Vagina (tissue), 2 donors: ENCODE measurements at regions of chr11 and their contacts with region 1.

Region 1: DNA sequence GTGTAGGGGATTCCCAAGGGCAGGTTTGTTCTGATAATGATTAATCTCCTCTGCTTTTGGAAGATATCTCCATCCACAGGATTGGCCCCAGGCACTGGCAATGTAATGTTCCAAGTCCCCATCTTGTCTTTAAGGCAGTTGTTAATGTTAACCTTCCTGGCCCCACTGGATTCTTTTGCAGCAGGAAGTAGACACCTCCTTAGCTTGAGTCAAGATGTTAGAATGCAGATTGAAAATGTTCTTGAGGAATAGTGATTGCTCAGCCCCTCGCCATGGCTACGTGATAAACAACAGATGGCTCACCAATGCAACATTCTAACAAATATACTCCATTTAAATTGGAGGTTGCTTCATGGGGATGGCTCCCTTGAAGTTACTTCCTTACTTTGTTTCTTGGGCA is 7.3 kb downstream of the HEPHL1 start:
- DNase-seq: peak in 1 of 2 donors; percentile 72
- H3K4me3 ChIP-seq: no peak overlapping the region
- H3K27ac ChIP-seq: no peak overlapping the region
- H3K4me1 ChIP-seq: no peaks in the 10 kb centered on the region
- H3K27me3 ChIP-seq: no peaks in the 10 kb centered on the region
- CTCF ChIP-seq: no peak
- POLR2A ChIP-seq: no peak

Region 2: DNA sequence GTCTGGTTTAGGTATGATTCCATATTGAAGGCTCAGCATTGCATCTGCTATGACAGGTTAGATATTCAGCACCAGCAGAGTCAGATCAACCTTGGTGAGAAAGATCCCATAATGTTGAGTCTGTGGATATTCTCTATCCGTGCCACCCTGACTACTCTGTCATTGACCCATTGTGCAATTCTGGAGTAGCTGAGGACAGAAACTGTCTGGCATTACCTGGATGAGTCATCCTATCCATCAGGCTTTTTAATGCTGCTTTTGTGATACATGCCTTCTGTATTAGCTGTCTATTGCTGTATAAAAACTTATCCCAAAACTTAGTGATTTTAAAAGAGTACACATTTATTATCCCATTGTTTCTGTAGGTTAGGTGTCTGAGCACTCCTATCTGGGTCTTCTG is 1992.9 kb before region 1 on chr11:
- intact Hi-C with region 1: loop called (anchors 10 kb)
- DNase-seq: no peak
- H3K4me3 ChIP-seq: no peak overlapping the region
- H3K27ac ChIP-seq: no peak overlapping the region
- H3K4me1 ChIP-seq: no peaks in the 10 kb centered on the region
- H3K27me3 ChIP-seq: no peaks in the 10 kb centered on the region
- CTCF ChIP-seq: no peak
- POLR2A ChIP-seq: no peak

Region 3: DNA sequence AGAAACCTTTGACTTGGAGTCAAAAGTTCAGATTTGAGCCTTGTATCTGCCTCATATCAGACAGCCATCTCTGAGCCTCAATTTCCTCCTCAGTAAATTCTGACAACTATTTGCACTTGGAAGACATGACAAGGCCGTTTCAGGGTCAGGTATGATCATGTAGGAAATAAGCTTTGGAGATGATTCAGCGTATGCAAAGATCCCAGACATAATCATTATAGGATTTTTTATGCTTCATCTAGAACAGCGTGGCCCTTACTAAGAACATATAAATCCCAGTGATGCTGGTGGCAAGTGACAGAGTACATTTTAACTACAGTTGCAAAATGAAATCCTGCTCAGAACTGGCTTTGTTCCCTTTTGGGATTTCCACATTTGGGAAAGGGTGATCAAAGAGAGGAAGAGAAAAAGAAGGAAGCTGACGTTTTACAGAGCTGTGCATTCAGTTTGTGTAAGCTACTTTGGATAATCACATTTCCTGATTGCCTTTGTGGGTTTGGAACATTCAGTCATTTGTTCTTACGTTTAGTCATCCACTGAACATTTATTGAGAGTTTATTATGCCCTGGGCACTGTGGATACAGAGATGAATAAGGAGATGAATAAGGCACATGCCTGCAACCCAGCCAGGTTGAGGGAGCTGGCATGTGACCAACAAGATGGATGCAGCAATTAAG is 89.2 kb before region 1 on chr11:
- intact Hi-C with region 1: no loop called
- DNase-seq: no peak
- H3K4me3 ChIP-seq: no peak overlapping the region
- H3K27ac ChIP-seq: no peak overlapping the region
- H3K4me1 ChIP-seq: no peaks in the 10 kb centered on the region
- H3K27me3 ChIP-seq: no peaks in the 10 kb centered on the region
- CTCF ChIP-seq: no peak
- POLR2A ChIP-seq: no peak

Region 4: GRCh38 chr11:93952082-93952780 is 76.2 kb before region 1 on chr11:
- intact Hi-C with region 1: no loop called
- DNase-seq: no peak
- H3K4me3 ChIP-seq: no peak overlapping the region
- H3K27ac ChIP-seq: no peak overlapping the region
- H3K4me1 ChIP-seq: peaks cover 9% of the 10 kb centered on the region
- H3K27me3 ChIP-seq: no peaks in the 10 kb centered on the region
- CTCF ChIP-seq: no peak
- POLR2A ChIP-seq: no peak

Region 5: GRCh38 chr11:94211261-94211830 is 182.9 kb after region 1 on chr11:
- intact Hi-C with region 1: no loop called
- DNase-seq: no peak
- H3K4me3 ChIP-seq: no peak overlapping the region
- H3K27ac ChIP-seq: no peak overlapping the region
- H3K4me1 ChIP-seq: no peaks in the 10 kb centered on the region
- H3K27me3 ChIP-seq: no peaks in the 10 kb centered on the region
- CTCF ChIP-seq: no peak
- POLR2A ChIP-seq: no peak